ENCODE measurements at regions of chr16 and their contacts with region 1.

Region 1: DNA sequence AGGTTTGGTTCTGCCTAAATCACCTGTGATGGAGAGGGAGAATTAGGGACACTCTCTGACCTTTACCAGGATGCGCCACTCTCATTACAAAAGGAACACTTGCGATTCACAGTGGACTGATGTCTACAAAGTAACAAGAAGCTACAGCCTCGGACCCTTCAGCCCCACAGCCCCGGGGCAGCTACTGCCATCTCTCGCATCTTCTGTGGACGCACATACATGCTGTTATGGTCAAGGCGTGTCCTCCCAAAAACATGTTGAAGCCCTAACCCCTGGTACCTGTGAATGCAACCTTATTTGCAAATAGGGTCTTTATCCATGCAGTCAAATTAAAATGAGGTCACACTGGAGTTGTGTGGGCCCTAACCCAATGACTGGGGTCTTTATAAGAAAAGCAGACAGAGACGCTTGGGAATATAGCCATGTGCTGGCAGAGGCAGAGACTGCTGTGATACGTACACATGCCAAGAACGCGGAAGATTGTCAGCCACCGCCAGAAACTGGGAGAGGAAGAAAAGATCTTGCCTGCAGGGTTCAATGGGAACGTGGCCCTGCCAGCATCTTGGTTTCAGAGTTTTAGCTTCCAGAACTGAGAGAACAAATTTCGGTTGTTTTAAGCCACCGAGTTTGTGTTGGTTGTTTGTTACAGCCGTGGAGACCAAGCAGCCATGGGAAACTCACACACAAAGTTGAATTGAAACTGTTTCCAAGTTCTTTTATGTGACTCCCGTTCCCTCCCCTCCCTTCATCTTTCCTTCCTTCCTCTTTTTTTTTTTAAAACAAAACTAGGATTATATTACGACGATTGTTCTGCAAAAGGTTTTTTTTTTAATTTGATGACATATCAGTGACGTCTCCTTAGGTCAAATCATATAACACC is 23.1 kb downstream of the ATP2C2 start:
- DNase-seq: no peak
- H3K4me3 ChIP-seq: no peak overlapping the region
- H3K27ac ChIP-seq: no peak overlapping the region
- H3K4me1 ChIP-seq: no peaks in the 10 kb centered on the region
- H3K27me3 ChIP-seq: peaks cover 3% of the 10 kb centered on the region
- CTCF ChIP-seq: no peak

Region 2: GRCh38 chr16:84478172-84478947 is 87.0 kb after region 1 on chr16:
- CTCF ChIA-PET with region 1: no interaction called
- dilution Hi-C with region 1: loop called (anchors 5 kb)
- in situ Hi-C with region 1: no loop called
- intact Hi-C with region 1: no loop called
- DNase-seq: peak; percentile 81
- H3K4me3 ChIP-seq: no peak overlapping the region
- H3K27ac ChIP-seq: peak overlapping the region; percentile 14
- H3K4me1 ChIP-seq: peaks cover 23% of the 10 kb centered on the region
- H3K27me3 ChIP-seq: no peaks in the 10 kb centered on the region
- CTCF ChIP-seq: no peak

Measured in mammary epithelial cell (primary cell).